ENCODE measurements at regions of chr7 and their contacts with region 1.

Region 1: GRCh38 chr7:134778941-134779740 is at the start of gene CALD1:
- DNase-seq: peak; percentile 92 to 96
- H3K4me3 ChIP-seq: peak within 1 kb of the TSS; percentile 22
- H3K4me3 Mint-ChIP-seq: peak within 1 kb of the TSS; percentile 79
- H3K27ac Mint-ChIP-seq: peak within 1 kb of the TSS; percentile 79
- H3K4me1 ChIP-seq: peaks cover 31% of the 10 kb centered on the region
- H3K4me1 Mint-ChIP-seq: peaks cover 30% of the 10 kb centered on the region
- H3K27me3 ChIP-seq: no peaks in the 10 kb centered on the region
- H3K27me3 Mint-ChIP-seq: no peaks in the 10 kb centered on the region
- CTCF ChIP-seq: no peak
- total RNA-seq, gene CALD1: 140 and 155 TPM in 2 replicates

Region 2: DNA sequence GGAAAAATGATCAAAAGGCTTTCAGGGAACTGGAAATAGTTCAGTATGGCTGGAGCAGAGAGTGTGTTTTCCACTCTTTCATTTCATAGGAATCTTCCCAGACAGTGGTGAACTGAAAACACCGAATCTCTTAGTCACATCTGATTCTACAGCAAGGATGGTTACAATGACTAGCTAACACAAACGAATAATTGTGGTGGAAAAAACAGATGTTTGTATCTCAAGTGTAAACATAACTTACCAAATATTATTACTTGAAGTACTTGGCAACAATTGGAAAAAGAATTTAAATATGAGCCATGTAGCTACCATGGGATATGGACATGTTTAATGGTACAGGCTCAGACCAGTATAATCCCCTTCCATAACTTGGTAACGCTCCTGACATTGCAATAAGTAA is 153.6 kb before region 1 on chr7:
- CTCF ChIA-PET with region 1: no interaction called
- POLR2A ChIA-PET with region 1: no interaction called
- intact Hi-C with region 1: no loop called
- DNase-seq: no peak
- H3K4me3 ChIP-seq: no peak overlapping the region
- H3K4me3 Mint-ChIP-seq: no peak overlapping the region
- H3K27ac Mint-ChIP-seq: no peak overlapping the region
- H3K4me1 ChIP-seq: no peaks in the 10 kb centered on the region
- H3K4me1 Mint-ChIP-seq: no peaks in the 10 kb centered on the region
- H3K27me3 ChIP-seq: no peaks in the 10 kb centered on the region; the same call in 1 of the 2 replicates
- H3K27me3 Mint-ChIP-seq: peaks cover 23% of the 10 kb centered on the region
- CTCF ChIP-seq: no peak

Region 3: DNA sequence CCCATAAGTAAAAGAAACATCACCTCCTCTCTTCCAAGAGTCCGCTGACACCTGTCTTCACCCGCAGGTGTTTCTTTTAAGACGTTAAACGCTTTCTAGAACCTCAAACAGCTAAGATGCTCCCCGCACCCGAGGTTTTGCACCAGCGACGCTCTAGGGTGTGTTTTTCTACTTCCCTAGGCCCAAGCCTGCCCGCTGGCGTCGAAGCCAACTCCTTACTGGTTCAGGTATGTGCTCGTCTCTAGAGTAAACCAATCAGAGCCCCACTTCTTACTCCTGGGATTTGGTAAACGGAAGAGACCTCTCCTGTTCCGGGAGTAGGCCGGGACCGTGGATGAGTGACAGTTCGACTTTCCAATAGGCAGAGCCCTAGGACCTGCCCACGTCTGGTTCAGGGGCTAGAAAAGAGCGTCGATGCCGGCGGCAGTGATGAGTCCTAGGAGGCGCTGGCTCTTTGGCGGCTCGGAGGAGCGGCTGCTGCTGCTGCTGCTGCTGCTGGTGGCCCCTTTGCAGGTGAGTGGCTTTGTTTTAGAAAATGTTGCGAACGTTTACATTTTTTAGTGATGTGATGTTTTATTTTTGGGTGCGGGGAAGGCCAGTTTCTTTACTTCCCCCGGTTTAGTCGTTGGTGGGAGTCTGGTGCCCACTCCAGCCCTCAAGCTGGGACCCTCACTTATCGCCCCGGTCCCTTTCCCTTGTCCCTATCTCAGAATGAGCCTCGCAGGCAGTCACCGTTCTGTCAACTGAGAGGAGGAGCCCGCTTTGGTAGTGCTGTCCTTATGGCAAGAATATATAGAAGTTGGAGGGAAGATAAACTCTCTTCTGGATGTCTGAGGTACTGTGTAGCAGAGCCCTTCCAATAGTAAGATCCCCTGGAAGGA is 132.5 kb before region 1 on chr7 and contains the start of gene BPGM:
- CTCF ChIA-PET with region 1: no interaction called
- POLR2A ChIA-PET with region 1: no interaction called
- intact Hi-C with region 1: loop called (anchors 1 kb)
- DNase-seq: peak; percentile 99 to 100
- H3K4me3 ChIP-seq: peak within 1 kb of the TSS; percentile 64
- H3K4me3 Mint-ChIP-seq: no peak within 1 kb of the TSS
- H3K27ac Mint-ChIP-seq: no peak within 1 kb of the TSS
- H3K4me1 ChIP-seq: 0 out of 2 replicates have a peak, but pooled peaks cover 4% of the 10 kb centered on the region
- H3K4me1 Mint-ChIP-seq: peaks cover 4% of the 10 kb centered on the region
- H3K27me3 ChIP-seq: no peaks in the 10 kb centered on the region
- H3K27me3 Mint-ChIP-seq: no peaks in the 10 kb centered on the region
- CTCF ChIP-seq: peak in 1 of 2 experiments; percentile 38
- total RNA-seq, gene BPGM: 7.2 and 8.1 TPM in 2 replicates

Region 4: DNA sequence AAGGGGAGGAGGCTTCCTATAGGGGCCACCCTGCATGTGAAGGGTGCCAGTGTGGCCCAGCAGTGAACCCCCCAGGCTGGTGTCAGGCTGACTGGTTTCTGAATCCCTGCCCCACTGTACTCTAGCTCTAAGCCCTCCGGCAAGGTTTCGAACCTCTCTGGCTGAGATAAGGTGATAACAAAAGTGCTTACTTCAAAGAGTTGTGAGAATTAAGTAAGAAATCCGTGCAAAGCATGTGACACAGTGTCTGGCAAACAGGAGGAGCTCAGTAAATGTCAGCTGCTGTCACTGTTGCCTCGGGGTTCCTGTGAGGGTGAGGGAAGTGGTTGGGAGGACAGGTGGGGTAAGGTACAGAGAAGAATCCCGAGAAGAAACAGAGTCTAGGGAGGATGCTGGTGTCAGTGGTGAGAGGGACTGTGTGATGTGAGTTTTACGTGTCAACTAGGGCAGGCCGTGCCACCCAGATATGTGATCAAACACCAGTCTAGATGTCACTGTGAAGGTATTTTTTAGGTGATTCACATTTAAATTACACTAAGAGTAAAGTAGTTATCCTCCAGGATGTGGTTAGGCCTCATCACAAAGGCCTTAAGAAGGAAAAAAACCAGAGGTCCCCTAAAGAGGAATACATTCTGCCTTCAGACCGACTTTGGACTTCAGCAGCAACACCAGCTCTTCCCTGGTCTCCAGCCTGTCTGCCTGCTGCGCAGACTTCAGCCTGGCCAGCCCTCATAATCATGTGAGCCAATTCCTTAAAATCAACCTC is 68.1 kb before region 1 on chr7:
- CTCF ChIA-PET with region 1: no interaction called
- POLR2A ChIA-PET with region 1: no interaction called
- intact Hi-C with region 1: loop called (anchors 2 kb)
- DNase-seq: peak; percentile 81 to 87
- H3K4me3 ChIP-seq: no peak overlapping the region
- H3K4me3 Mint-ChIP-seq: peak overlapping the region; percentile 11
- H3K27ac Mint-ChIP-seq: peak overlapping the region; percentile 78
- H3K4me1 ChIP-seq: peaks cover 28% of the 10 kb centered on the region
- H3K4me1 Mint-ChIP-seq: peaks cover 31% of the 10 kb centered on the region
- H3K27me3 ChIP-seq: no peaks in the 10 kb centered on the region
- H3K27me3 Mint-ChIP-seq: no peaks in the 10 kb centered on the region
- CTCF ChIP-seq: no peak

Region 5: GRCh38 chr7:134761266-134761665 is 17.9 kb before region 1 on chr7:
- CTCF ChIA-PET with region 1: no interaction called
- POLR2A ChIA-PET with region 1: no interaction called
- intact Hi-C with region 1: loop called (anchors 2 kb)
- DNase-seq: no peak
- H3K4me3 ChIP-seq: no peak overlapping the region
- H3K4me3 Mint-ChIP-seq: peak overlapping the region; percentile 14
- H3K27ac Mint-ChIP-seq: peak overlapping the region; percentile 27
- H3K4me1 ChIP-seq: peaks cover 34% of the 10 kb centered on the region
- H3K4me1 Mint-ChIP-seq: peaks cover 44% of the 10 kb centered on the region
- H3K27me3 ChIP-seq: no peaks in the 10 kb centered on the region
- H3K27me3 Mint-ChIP-seq: no peaks in the 10 kb centered on the region
- CTCF ChIP-seq: no peak

Region 6: DNA sequence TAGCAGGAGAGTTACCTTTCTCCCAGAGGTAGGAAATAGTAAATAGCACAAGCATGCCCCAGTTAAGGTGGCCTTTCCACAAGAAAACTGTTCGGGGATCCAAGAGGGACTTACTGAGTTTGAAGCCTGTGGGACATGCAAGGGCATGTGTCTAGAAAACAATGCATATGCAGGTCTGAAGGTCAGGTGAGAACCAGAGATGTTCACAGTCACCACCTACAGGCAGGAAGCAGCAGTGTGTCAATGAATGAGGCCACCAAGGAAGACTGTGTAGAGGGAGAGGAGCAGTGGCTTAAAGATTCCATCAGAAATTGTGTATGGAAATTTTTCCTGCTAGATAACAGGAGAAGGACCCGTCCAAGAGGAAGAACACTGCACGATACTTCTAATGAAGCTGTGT is 66.3 kb after region 1 on chr7:
- CTCF ChIA-PET with region 1: no interaction called
- POLR2A ChIA-PET with region 1: interaction called, 3 read pairs
- intact Hi-C with region 1: loop called (anchors 1 kb)
- DNase-seq: peak; percentile 48 to 53
- H3K4me3 ChIP-seq: no peak overlapping the region
- H3K4me3 Mint-ChIP-seq: no peak overlapping the region
- H3K27ac Mint-ChIP-seq: no peak overlapping the region
- H3K4me1 ChIP-seq: peaks cover 22% of the 10 kb centered on the region
- H3K4me1 Mint-ChIP-seq: peaks cover 33% of the 10 kb centered on the region
- H3K27me3 ChIP-seq: no peaks in the 10 kb centered on the region
- H3K27me3 Mint-ChIP-seq: no peaks in the 10 kb centered on the region
- CTCF ChIP-seq: peak; percentile 42 to 66

Region 7: DNA sequence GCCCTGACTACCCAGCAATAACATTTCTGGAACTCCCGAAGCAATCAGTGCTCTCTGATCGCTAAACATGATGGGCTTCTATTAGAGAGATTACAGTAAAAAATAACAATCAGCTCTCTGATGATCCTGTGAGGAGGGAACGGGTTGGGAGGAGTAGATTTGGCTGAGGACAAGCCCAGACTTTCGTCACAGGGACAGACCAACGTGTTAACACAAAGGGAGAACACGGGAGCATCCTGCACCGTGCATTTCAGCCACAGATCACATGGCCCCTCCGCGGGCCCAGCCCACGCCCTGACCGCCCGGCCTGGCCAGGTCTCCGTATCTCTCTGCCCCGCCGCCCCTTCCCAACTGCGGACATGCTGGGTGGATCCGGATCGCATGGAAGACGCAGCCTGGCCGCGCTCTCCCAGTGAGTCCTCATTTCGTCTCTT is 112.1 kb after region 1 on chr7:
- CTCF ChIA-PET with region 1: no interaction called
- POLR2A ChIA-PET with region 1: no interaction called
- intact Hi-C with region 1: loop called (anchors 2 kb)
- DNase-seq: peak; percentile 94 to 96
- H3K4me3 ChIP-seq: peak overlapping the region; percentile 51
- H3K4me3 Mint-ChIP-seq: peak overlapping the region; percentile 71
- H3K27ac Mint-ChIP-seq: peak overlapping the region; percentile 46
- H3K4me1 ChIP-seq: peaks cover 54% of the 10 kb centered on the region
- H3K4me1 Mint-ChIP-seq: peaks cover 44% of the 10 kb centered on the region
- H3K27me3 ChIP-seq: no peaks in the 10 kb centered on the region
- H3K27me3 Mint-ChIP-seq: no peaks in the 10 kb centered on the region
- CTCF ChIP-seq: no peak

Measured in Caco-2 (cell line).